OCI-LY7 (cell line): ENCODE measurements at regions of chr5 and their contacts with region 1.

Region 1: GRCh38 chr5:76199336-76200318 is 116.4 kb downstream of the SV2C start:
- DNase-seq: no peak
- H3K4me3 ChIP-seq: no peak overlapping the region
- H3K27ac ChIP-seq: no peak overlapping the region
- H3K4me1 ChIP-seq: peaks cover 7% of the 10 kb centered on the region
- CTCF ChIP-seq: no peak

Region 2: GRCh38 chr5:75656311-75657003 is 543.2 kb before region 1 on chr5:
- CTCF ChIA-PET with region 1: no interaction called
- POLR2A ChIA-PET with region 1: no interaction called
- intact Hi-C with region 1: no loop called
- DNase-seq: no peak
- H3K4me3 ChIP-seq: no peak overlapping the region
- H3K27ac ChIP-seq: no peak overlapping the region
- H3K4me1 ChIP-seq: no peaks in the 10 kb centered on the region
- CTCF ChIP-seq: no peak

Region 3: DNA sequence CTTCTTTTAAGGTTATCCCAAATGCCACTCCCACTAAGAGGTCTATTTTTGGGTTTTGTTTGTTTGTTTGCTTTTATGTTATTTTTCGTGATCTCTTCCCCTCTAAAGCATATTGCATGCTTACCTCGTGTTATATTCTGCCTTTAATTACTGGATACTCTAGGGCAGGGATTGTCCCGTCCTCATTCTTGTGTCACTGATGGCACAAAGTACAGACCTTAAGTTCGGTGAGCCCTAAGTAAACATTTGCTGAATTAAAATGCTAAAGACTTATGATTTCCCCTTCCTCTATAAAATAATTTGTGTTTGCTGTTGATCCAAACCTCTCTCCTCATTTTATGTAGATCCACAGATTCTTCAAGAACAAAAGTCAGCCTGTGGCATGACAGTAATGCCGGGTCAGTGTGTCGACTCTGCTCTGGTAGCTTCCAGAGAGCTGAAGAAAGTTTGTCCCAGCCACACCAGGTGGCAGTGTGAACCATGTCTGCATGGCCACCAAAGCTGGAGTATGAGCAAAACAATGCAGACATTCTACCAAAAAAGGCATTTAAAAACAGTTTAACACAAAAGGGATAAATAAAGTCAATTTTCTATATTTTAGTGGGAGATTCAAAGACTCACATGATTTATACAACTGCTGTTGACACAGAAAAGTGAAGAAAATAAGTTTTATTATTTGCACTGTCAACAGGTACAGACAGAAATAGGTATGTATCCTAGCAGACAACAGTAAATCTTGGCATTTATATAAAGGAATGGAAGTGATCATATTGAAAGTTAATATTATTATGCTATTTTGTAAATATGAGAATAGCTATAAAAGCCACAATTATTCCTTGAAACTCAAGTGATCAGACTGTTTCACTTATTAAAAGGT is 464.5 kb before region 1 on chr5:
- CTCF ChIA-PET with region 1: no interaction called
- POLR2A ChIA-PET with region 1: no interaction called
- intact Hi-C with region 1: no loop called
- DNase-seq: peak; percentile 10
- H3K4me3 ChIP-seq: no peak overlapping the region
- H3K27ac ChIP-seq: no peak overlapping the region
- H3K4me1 ChIP-seq: no peaks in the 10 kb centered on the region
- CTCF ChIP-seq: peak; percentile 71

Region 4: GRCh38 chr5:76134546-76135045 is 65.0 kb before region 1 on chr5:
- CTCF ChIA-PET with region 1: no interaction called
- POLR2A ChIA-PET with region 1: interaction called, 4 read pairs
- intact Hi-C with region 1: loop called (anchors 10 kb)
- DNase-seq: no peak
- H3K4me3 ChIP-seq: no peak overlapping the region
- H3K27ac ChIP-seq: no peak overlapping the region
- H3K4me1 ChIP-seq: no peaks in the 10 kb centered on the region
- CTCF ChIP-seq: no peak

Region 5: DNA sequence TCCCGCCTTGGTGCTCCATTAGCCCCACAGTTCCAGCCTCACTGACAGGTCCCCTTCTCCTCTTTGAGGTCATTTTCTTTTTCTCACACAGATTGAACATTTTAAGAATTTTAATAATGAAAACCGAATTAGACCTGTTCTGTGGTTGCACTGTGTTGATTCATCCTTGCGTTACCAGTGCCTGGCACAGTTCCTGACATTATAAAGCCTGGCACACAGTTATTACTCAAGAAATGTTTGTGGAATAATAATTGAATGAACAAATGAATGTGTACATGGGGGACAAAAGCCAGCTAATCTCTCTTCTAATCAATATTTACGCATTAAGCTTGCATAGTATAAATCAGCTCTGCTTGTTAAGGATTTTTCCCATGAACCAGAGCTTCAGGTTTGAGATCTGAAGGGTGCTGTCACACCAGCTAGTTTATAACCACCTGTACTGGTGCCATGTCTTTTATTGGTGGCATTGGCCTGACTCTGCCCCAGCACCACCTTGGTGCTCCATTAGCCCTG is 36.5 kb before region 1 on chr5:
- CTCF ChIA-PET with region 1: no interaction called
- POLR2A ChIA-PET with region 1: no interaction called
- intact Hi-C with region 1: no loop called
- DNase-seq: no peak
- H3K4me3 ChIP-seq: no peak overlapping the region
- H3K27ac ChIP-seq: no peak overlapping the region
- H3K4me1 ChIP-seq: no peaks in the 10 kb centered on the region
- CTCF ChIP-seq: no peak